PC-9 (cell line): ENCODE measurements at regions of chr13 and their contacts with region 1.

Region 1: DNA sequence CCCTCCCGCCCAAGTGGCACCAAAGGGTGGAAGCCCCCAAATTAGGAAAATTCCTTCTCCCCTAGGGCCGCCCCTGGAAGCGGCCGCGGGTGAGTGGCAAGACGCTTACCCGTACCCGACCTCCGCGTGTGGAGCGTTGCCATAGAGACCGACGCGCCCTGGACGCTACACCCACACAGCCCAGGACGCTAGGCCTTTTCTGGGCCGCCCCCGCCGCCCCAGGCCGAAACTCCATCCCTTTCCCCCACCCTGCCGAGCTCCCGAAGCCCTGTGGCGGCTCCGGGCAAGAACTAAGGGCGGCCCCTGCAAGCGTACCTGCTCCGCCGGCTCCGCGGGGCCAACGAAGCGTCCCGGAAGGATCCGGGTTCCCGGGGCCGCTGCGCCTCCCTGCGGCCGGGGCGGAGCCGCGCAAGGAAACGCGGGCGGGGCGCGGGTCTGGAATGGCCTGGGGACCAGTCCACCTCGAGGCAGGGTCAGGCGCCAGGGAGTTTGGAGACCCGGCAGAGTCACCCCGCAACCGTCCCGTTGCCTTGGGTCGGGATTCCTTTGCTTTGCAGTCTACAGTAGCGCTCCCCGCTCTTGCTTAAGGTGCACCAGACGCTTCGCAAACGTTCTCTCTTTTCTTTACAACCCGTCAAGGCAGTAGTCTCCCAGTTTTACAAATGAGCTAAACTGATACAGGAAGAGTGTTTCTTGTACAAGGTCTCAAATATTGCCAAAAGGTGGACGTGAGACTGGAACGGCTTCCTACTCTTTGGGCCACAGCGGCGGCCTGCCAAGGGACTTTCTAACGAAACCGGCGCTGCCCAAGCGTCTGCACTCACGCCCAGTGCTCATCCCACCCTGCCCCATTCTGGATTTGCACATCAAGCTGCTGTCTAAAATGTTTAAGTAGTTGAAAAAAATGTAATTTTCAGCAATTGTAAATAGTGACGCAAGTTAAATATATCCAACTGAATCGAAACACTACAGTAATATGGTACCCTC is at the start of gene NEK5:
- DNase-seq: peak in 1 of 2 experiments; percentile 65
- H3K4me3 ChIP-seq: peak within 1 kb of the TSS; percentile 63
- H3K27ac ChIP-seq: no peak within 1 kb of the TSS
- H3K4me1 ChIP-seq: peaks cover 11% of the 10 kb centered on the region
- H3K27me3 ChIP-seq: no peaks in the 10 kb centered on the region; the same call in 1 of the 2 replicates
- CTCF ChIP-seq: peak; percentile 72
- total RNA-seq, gene NEK5: not detected in 2 replicates

Region 2: GRCh38 chr13:51125498-51126226 is 1003.3 kb before region 1 on chr13:
- CTCF ChIA-PET with region 1: no interaction called
- POLR2A ChIA-PET with region 1: no interaction called
- intact Hi-C with region 1: loop called (anchors 2 kb)
- DNase-seq: peak in 1 of 2 experiments; percentile 41
- H3K4me3 ChIP-seq: no peak overlapping the region
- H3K27ac ChIP-seq: no peak overlapping the region
- H3K4me1 ChIP-seq: no peaks in the 10 kb centered on the region
- H3K27me3 ChIP-seq: peaks cover 19% of the 10 kb centered on the region; the same call in 1 of the 2 replicates
- CTCF ChIP-seq: peak; percentile 78

Region 3: GRCh38 chr13:51803422-51804294 is 325.3 kb before region 1 on chr13 and contains the start of gene DHRS12:
- CTCF ChIA-PET with region 1: no interaction called
- POLR2A ChIA-PET with region 1: no interaction called
- intact Hi-C with region 1: loop called (anchors 5 kb)
- DNase-seq: peak; percentile 60 to 83
- H3K4me3 ChIP-seq: peak within 1 kb of the TSS; percentile 69
- H3K27ac ChIP-seq: peak within 1 kb of the TSS; percentile 54
- H3K4me1 ChIP-seq: peaks cover 26% of the 10 kb centered on the region
- H3K27me3 ChIP-seq: no peaks in the 10 kb centered on the region
- CTCF ChIP-seq: no peak
- total RNA-seq, gene DHRS12: 6.9 and 11.9 TPM in 2 replicates

Region 4: GRCh38 chr13:51895906-51896888 is 232.8 kb before region 1 on chr13:
- CTCF ChIA-PET with region 1: no interaction called
- POLR2A ChIA-PET with region 1: no interaction called
- intact Hi-C with region 1: loop called (anchors 1 kb)
- DNase-seq: peak; percentile 24 to 39
- H3K4me3 ChIP-seq: no peak overlapping the region
- H3K27ac ChIP-seq: no peak overlapping the region
- H3K4me1 ChIP-seq: no peaks in the 10 kb centered on the region
- H3K27me3 ChIP-seq: peaks cover 36% of the 10 kb centered on the region
- CTCF ChIP-seq: peak; percentile 73

Region 5: DNA sequence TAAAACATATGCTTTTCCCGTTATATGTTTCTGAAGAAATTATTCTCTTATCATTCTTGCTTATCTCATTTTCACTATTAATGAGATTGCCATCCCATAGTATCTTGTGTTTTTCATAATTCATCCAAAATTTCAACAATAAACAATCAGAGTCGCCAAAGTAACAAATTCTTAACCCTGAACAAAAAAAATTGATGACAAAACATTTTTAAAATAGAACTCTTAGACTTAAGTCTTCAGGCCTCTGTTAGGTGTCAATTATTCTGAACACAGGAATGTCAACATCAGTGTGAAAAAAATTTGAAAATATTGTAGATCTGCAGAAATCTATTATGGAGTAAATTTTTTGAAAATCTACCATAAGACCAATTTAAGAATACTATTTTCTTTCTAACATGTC is 37.5 kb before region 1 on chr13:
- CTCF ChIA-PET with region 1: no interaction called
- POLR2A ChIA-PET with region 1: no interaction called
- intact Hi-C with region 1: no loop called
- DNase-seq: no peak
- H3K4me3 ChIP-seq: no peak overlapping the region
- H3K27ac ChIP-seq: no peak overlapping the region
- H3K4me1 ChIP-seq: no peaks in the 10 kb centered on the region
- H3K27me3 ChIP-seq: no peaks in the 10 kb centered on the region
- CTCF ChIP-seq: no peak

Region 6: GRCh38 chr13:52194184-52194868 is 65.3 kb after region 1 on chr13:
- CTCF ChIA-PET with region 1: interaction called, 4 read pairs
- POLR2A ChIA-PET with region 1: no interaction called
- intact Hi-C with region 1: loop called (anchors 5 kb)
- DNase-seq: peak; percentile 68 to 84
- H3K4me3 ChIP-seq: peak overlapping the region; percentile 92
- H3K27ac ChIP-seq: peak overlapping the region; percentile 35
- H3K4me1 ChIP-seq: peaks cover 13% of the 10 kb centered on the region
- H3K27me3 ChIP-seq: no peaks in the 10 kb centered on the region
- CTCF ChIP-seq: no peak